Transverse colon (tissue), 4 donors: ENCODE measurements at regions of chr17 and their contacts with region 1.

Region 1: GRCh38 chr17:69235338-69235930 is 6.8 kb upstream of the ABCA10 start:
- DNase-seq: peak; percentile 78
- H3K4me3 ChIP-seq: no peak overlapping the region
- H3K27ac ChIP-seq: no peak overlapping the region
- H3K4me1 ChIP-seq: peaks cover 0 to 6% (median 0%) of the 10 kb centered on the region in 4 donors
- H3K27me3 ChIP-seq: no peaks in the 10 kb centered on the region
- CTCF ChIP-seq: peak; percentile 61 to 79 (median 68)
- EP300 ChIP-seq: no peak
- POLR2A ChIP-seq: no peak

Region 2: DNA sequence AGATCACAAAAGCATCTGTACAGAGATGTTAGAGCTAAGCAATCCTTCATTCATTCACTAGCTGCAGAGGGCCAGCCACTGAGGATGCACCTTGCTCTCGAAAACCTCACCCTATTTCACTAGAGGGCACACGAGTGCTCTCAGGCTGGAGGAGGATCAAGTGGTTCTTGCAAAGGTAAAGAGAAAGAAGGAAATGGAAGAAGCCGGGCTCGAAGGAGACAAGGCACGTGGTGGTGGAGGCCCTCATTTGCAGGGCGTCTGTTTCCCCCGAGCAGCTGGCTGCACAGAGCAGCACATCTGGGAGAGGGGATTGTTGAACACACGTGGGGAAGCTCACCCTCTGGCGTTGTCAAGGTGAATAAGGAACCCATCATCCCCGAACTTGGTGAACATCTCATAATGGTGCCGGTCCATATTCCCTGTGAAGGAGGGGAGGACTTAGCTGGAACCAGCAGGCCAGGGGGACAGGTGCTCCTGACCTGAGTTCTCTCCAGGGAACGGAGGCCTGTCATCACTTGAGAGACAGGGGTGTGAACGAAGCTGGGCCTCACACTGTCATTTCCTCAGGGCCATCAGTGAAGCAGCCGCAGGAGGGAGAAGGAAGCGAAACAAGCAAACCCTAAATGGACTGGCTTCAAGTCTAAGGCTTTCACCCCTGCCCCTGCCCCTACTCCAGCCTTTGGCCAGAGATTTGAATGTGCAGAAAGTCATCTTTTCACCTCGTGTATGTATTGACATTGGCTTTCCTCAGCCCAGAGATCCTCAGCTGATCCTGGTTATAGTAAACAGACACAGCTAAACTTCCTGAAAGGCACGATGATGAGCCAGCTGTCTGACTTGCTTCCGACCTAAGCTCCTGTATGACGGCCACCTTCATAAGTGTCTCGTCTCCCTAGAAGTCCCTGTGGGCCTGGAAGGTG is 695.6 kb before region 1 on chr17:
- in situ Hi-C with region 1: loop called in 3 of 4 experiments (anchors 25 kb)
- intact Hi-C with region 1: no loop called
- DNase-seq: no peak
- H3K4me3 ChIP-seq: no peak overlapping the region
- H3K27ac ChIP-seq: no peak overlapping the region
- H3K4me1 ChIP-seq: no peaks in the 10 kb centered on the region
- H3K27me3 ChIP-seq: no peaks in the 10 kb centered on the region
- CTCF ChIP-seq: no peak
- EP300 ChIP-seq: no peak
- POLR2A ChIP-seq: no peak

Region 3: GRCh38 chr17:68771867-68772515 is 463.4 kb before region 1 on chr17:
- in situ Hi-C with region 1: loop called in 3 of 4 experiments (anchors 5 to 10 kb)
- intact Hi-C with region 1: loop called (anchors 5 kb)
- DNase-seq: no peak
- H3K4me3 ChIP-seq: no peak overlapping the region
- H3K27ac ChIP-seq: peak overlapping the region in 3 of 4 donors; percentile 9 to 36 (median 29)
- H3K4me1 ChIP-seq: peaks cover 0 to 13% (median 4%) of the 10 kb centered on the region in 4 donors
- H3K27me3 ChIP-seq: no peaks in the 10 kb centered on the region
- CTCF ChIP-seq: peak; percentile 47 to 61 (median 56)
- EP300 ChIP-seq: no peak
- POLR2A ChIP-seq: no peak

Region 4: GRCh38 chr17:68777243-68777855 is 458.1 kb before region 1 on chr17:
- in situ Hi-C with region 1: loop called in 3 of 4 experiments (anchors 5 to 10 kb)
- intact Hi-C with region 1: loop called (anchors 5 kb)
- DNase-seq: peak; percentile 43
- H3K4me3 ChIP-seq: peak overlapping the region in 1 of 4 donors; percentile 5
- H3K27ac ChIP-seq: peak overlapping the region; percentile 20 to 57 (median 36)
- H3K4me1 ChIP-seq: peaks cover 0 to 28% (median 11%) of the 10 kb centered on the region in 4 donors
- H3K27me3 ChIP-seq: no peaks in the 10 kb centered on the region
- CTCF ChIP-seq: peak; percentile 55 to 75 (median 70)
- EP300 ChIP-seq: no peak
- POLR2A ChIP-seq: no peak

Region 5: GRCh38 chr17:69314246-69315065 is 79.0 kb after region 1 on chr17:
- in situ Hi-C with region 1: no loop called
- intact Hi-C with region 1: no loop called
- DNase-seq: no peak
- H3K4me3 ChIP-seq: no peak overlapping the region
- H3K27ac ChIP-seq: no peak overlapping the region
- H3K4me1 ChIP-seq: no peaks in the 10 kb centered on the region
- H3K27me3 ChIP-seq: no peaks in the 10 kb centered on the region
- CTCF ChIP-seq: no peak
- EP300 ChIP-seq: no peak
- POLR2A ChIP-seq: no peak

Region 6: DNA sequence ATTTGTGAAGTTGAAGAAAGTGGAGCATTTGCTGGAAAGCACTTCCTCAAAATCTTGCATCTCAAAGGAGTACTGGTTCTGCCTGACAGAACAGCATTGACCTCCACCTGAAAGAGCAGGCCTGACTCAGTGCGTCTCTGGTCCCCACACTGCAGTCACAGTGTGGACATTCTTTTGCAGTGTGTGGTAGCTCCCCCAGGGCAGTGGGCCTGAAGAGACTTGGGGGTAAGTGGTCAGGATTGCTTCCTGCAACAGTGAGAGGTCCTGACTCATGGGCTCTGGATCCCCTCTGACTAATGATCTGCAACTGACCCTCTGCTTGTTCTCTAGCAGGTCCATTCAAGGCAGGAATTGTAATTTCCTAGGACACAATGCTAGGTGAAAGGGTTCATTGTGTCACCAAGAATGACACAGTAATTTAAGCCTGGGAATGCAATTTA is 634.7 kb after region 1 on chr17:
- in situ Hi-C with region 1: no loop called
- intact Hi-C with region 1: no loop called
- DNase-seq: no peak
- H3K4me3 ChIP-seq: no peak overlapping the region
- H3K27ac ChIP-seq: no peak overlapping the region
- H3K4me1 ChIP-seq: no peaks in the 10 kb centered on the region
- H3K27me3 ChIP-seq: no peaks in the 10 kb centered on the region
- CTCF ChIP-seq: no peak
- EP300 ChIP-seq: no peak
- POLR2A ChIP-seq: no peak